OCI-LY7 (cell line): ENCODE measurements at regions of chr17 and their contacts with region 1.

Region 1: DNA sequence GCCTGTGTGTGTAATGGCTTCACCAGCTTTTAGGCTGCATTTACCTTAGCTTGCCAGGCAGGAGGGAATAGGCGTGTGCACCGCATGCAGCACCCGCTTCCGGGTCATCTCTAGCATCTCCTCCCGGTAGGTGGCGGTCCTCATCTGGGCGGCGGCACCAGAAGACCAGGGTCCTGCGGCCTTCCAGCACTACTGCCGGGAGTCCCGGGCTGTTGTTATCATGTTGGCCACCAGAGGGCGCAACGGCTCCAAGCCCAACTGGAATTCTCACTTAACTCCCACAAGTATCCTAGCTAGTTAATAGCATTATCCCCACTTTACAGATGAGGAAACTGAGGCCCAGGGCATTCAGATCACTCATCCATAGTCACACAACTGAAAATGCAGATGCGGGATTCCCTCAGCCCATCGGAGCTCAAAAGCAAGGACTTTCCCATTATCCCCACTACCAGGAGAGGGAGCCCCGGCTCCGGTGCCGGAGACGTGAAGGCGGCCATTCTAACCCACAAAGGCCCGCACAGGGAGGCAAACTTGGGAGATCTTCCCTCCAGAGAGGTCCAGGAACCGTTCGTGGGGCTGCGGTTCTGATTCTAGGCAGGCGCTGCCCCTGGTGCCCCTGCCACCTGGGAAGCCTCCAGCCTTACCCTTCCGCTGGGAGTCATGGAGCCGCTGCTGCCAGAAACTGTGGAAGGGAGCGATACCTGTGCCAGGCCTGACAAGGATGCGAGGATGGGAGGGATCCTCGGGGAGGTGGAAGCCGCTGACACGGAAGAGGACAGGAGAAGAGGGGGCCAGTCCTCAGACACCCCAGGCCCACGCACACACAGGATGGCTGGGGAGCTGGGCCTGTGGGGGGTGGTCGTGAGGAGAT is 23.9 kb downstream of the LGALS9 start:
- DNase-seq: peak; percentile 88
- H3K4me3 ChIP-seq: no peak overlapping the region
- H3K27ac ChIP-seq: no peak overlapping the region
- H3K4me1 ChIP-seq: peaks cover 4% of the 10 kb centered on the region
- CTCF ChIP-seq: peak; percentile 99

Region 2: GRCh38 chr17:27236717-27237315 is 418.1 kb before region 1 on chr17:
- CTCF ChIA-PET with region 1: no interaction called
- POLR2A ChIA-PET with region 1: no interaction called
- intact Hi-C with region 1: loop called (anchors 5 kb)
- DNase-seq: peak; percentile 72
- H3K4me3 ChIP-seq: no peak overlapping the region
- H3K27ac ChIP-seq: no peak overlapping the region
- H3K4me1 ChIP-seq: peaks cover 6% of the 10 kb centered on the region
- CTCF ChIP-seq: peak; percentile 97

Region 3: DNA sequence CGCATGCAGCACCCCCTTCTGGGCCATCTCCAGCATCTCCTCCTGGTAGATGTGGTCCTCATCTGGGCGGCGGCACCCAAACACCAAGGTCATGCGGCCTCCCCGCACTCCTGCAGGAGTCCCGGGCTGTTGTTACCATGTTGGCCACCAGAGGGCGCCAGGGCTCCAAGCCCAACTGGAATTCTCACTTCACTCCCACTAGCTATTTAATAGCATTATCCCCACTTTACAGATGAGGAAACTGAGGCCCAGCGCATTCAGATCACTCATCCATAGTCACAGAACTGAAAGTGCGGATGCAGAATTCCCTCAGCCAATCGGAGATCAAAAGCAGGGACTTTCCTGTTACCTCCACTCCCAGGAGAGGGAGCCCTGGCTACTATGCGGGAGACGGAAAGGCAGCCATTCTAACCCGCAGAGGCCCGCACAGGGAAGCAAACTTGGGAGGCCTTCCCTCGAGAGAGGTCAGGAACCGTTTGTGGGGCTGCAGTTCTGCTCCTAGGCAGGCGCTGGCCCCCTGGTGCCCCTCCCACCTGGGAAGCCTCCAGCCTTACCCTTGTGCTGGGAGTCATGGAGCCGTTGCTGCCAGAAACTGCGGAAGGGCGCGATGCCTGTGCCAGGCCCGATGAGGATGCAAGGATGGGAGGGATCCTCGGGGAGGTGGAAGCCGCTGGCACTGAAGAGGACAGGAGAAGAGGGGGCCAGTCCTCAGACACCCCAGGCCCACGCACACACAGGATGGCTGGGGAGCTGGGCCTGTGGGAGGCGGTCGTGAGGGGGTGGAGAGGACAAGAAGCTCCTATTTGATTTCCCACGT is 105.4 kb after region 1 on chr17:
- CTCF ChIA-PET with region 1: interaction called, 3 read pairs
- POLR2A ChIA-PET with region 1: no interaction called
- intact Hi-C with region 1: loop called (anchors 1 kb)
- DNase-seq: peak; percentile 59
- H3K4me3 ChIP-seq: no peak overlapping the region
- H3K27ac ChIP-seq: no peak overlapping the region
- H3K4me1 ChIP-seq: no peaks in the 10 kb centered on the region
- CTCF ChIP-seq: peak; percentile 93

Region 4: DNA sequence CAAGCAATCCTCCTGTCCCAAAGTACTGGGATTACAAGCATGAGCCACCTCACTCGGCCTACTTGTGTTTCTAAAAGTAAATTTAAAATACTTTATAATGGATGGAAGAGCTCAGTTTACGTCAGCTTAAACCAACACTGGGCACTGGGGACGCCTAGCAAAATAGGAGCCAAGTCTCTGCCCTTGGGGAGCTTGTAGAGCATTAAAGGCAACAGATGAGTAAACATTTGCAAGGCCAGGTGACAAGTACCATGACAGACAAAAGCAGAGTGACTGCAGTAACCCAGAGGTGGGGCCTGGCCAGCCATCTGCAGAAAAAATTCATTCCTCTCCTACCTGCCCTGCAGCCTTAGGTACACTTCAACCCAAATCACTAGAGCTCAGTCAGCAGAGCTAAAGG is 375.5 kb after region 1 on chr17:
- CTCF ChIA-PET with region 1: no interaction called
- POLR2A ChIA-PET with region 1: no interaction called
- intact Hi-C with region 1: no loop called
- DNase-seq: no peak
- H3K4me3 ChIP-seq: no peak overlapping the region
- H3K27ac ChIP-seq: no peak overlapping the region
- H3K4me1 ChIP-seq: no peaks in the 10 kb centered on the region
- CTCF ChIP-seq: no peak